ENCODE measurements at regions of chr12 and their contacts with region 1.

Region 1: GRCh38 chr12:88993651-88994050 is 358.6 kb downstream of the DUSP6 start:
- DNase-seq: no peak
- H3K4me3 ChIP-seq: no peak overlapping the region
- H3K27ac ChIP-seq: no peak overlapping the region
- H3K4me1 ChIP-seq: no peaks in the 10 kb centered on the region
- H3K27me3 ChIP-seq: no peaks in the 10 kb centered on the region
- CTCF ChIP-seq: peak; percentile 56 to 72 (median 57)
- EP300 ChIP-seq: no peak
- POLR2A ChIP-seq: no peak

Region 2: DNA sequence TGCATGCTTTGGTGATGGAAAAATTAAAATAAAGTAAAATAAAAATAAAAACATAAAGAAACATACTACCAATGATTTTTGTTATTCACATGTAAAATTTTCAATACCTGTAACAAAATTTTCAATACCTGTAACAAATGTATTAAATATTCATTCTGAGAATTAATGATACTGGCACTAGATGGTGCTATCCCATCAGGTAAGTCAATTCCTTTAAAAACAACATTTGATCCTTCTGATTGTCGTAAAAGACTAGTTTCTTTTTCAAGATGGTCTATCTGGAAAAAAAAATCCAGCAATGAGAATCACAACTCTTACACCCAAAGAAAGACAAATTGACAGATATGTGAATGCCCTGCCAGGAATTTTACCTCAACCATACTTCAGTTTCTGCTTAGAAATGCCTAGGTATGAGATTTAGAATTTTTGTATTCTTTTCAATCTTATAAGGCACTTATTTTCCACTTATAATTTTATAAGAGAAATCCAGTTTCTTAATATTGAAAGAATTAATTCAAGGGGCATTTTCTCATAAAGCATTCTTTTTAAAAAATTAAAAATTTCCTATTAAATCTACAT is 882.5 kb before region 1 on chr12:
- in situ Hi-C with region 1: loop called in 2 of 4 experiments (anchors 10 to 25 kb)
- intact Hi-C with region 1: loop called (anchors 10 kb)
- DNase-seq: no peak
- H3K4me3 ChIP-seq: peak overlapping the region in 2 of 4 donors; percentile 13 to 28
- H3K27ac ChIP-seq: no peak overlapping the region
- H3K4me1 ChIP-seq: peaks cover 0 to 6% (median 2%) of the 10 kb centered on the region in 4 donors
- H3K27me3 ChIP-seq: no peaks in the 10 kb centered on the region
- CTCF ChIP-seq: peak; percentile 39 to 62 (median 46)
- EP300 ChIP-seq: no peak
- POLR2A ChIP-seq: no peak

Region 3: GRCh38 chr12:88141770-88142609 is 851.7 kb before region 1 on chr12 and contains the starts of genes CEP290 and TMTC3:
- in situ Hi-C with region 1: loop called in 2 of 4 experiments (anchors 25 kb)
- intact Hi-C with region 1: no loop called
- DNase-seq: peak; percentile 96
- H3K4me3 ChIP-seq: peak within 1 kb of the TSS; percentile 65 to 97 (median 70)
- H3K27ac ChIP-seq: peak within 1 kb of the TSS; percentile 81 to 94 (median 86)
- H3K4me1 ChIP-seq: peaks cover 11 to 34% (median 17%) of the 10 kb centered on the region in 4 donors
- H3K27me3 ChIP-seq: no peaks in the 10 kb centered on the region
- CTCF ChIP-seq: no peak
- EP300 ChIP-seq: no peak
- POLR2A ChIP-seq: peak; percentile 71
- total RNA-seq, gene CEP290: 15.1 to 44.9 (median 18.8) TPM
- total RNA-seq, gene TMTC3: 2.2 to 15.9 (median 10.0) TPM

Region 4: DNA sequence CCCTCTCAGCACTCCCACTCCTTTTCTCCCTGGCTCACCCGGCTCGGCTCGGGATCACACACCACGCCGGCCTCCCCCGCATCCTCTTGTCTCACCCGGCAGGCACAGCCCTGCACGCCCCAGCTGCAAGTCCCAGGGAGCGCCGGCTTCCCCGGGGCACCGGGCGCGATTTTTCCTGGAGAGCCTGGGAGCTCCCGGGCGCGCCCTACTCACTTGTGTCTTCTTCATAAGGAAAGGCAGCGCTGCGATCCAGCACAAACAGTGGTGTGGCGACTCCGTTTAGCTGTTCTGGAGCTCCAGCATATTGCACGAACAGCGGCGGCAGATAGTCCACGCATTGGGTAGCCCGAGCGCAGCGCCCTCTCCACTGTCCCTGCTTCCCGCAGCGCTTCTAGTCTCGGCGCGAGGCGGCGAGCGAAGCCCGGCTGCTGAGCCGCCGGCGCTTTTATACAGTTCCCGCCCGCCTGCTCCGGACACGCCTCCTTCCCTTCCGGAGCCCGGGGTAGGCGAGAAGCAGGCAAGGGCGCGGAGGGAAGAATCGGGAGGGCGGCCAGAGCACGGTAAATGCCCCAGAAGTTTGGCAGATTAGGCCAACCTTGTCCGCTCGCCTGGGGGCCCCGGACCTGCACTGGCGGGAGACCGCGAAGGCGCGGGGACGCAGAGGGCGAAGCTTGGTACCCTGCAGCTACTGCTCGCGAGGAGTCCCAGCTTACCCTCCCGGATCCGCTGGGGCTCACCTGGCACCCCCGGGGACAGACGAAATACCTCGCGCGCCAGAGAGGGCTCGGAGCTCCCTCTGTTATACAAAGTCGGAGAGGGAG is 413.4 kb before region 1 on chr12 and contains the start of gene KITLG:
- in situ Hi-C with region 1: loop called (anchors 25 kb)
- intact Hi-C with region 1: no loop called
- DNase-seq: peak; percentile 89
- H3K4me3 ChIP-seq: peak within 1 kb of the TSS; percentile 64 to 70 (median 68)
- H3K27ac ChIP-seq: peak within 1 kb of the TSS; percentile 86 to 92 (median 90)
- H3K4me1 ChIP-seq: peaks cover 0 to 35% (median 24%) of the 10 kb centered on the region in 4 donors
- H3K27me3 ChIP-seq: no peaks in the 10 kb centered on the region
- CTCF ChIP-seq: peak in 4 of 5 experiments; percentile 18 to 42 (median 28)
- EP300 ChIP-seq: no peak
- POLR2A ChIP-seq: peak; percentile 90
- total RNA-seq, gene KITLG: 10.5 to 44.6 (median 29.1) TPM